Cardiac septum (tissue), 1 donor: ENCODE measurements at regions of chr21 and their contacts with region 1.

Region 1: GRCh38 chr21:28639737-28640136 is 352.9 kb downstream of the LTN1 start:
- DNase-seq: no peak

Region 2: GRCh38 chr21:28737674-28738419 is 98.1 kb after region 1 on chr21:
- intact Hi-C with region 1: loop called (anchors 5 kb)
- DNase-seq: no peak